Heart left ventricle (tissue), 16 donors: ENCODE measurements at regions of chr16 and their contacts with region 1.

Region 1: DNA sequence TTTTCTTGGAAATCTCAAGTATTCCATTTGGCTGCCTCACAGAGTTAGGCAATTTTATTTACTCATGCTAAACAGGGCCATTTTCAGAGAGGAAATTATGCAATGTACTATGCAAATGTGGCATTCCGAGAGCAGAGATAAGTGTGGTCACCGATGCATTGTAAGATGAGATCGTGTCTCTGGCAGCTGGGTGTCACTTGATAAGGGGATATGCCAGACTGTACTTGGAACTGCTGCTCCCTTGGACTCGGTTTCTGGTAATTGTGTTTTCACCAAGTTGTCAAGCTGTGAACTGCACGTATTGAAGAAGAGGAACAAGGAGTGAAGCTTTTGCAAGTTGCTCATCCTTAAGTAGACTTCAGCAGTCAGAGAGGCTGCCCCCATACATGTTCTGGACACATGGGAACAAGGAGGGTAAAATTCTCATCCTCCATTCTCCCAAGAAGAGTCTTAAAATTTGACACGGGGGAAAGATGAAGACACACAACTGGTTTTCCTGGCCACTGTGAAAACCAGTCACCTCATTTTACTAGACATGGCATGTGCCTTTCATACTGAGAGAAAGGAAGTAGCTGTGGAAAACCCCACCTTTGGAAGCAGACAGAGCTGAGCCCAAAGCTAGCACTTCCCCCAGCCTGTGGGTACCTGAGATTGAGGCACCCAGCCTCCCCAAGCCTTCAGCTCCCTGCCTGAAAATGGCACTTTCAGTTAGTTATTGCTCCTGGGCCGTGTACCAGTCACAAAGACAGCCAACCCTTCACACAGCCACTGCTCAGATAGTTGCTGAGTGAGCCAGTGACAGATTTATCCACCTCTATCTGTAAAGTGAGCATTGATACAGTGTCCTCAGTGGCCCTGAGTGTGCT is 150.7 kb downstream of the SOCS1 start:
- DNase-seq: no peak
- ATAC-seq: peak; percentile 15 to 79 (median 54)
- H3K4me3 ChIP-seq: no peak overlapping the region
- H3K27ac ChIP-seq: peak overlapping the region in 7 of 12 donors; percentile 20 to 78 (median 45)
- H3K4me1 ChIP-seq: peaks cover 9 to 64% (median 44%) of the 10 kb centered on the region in 12 donors
- H3K27me3 ChIP-seq: no peaks in the 10 kb centered on the region
- CTCF ChIP-seq: no peak
- POLR2A ChIP-seq: no peak

Region 2: GRCh38 chr16:10971560-10971961 is 133.7 kb before region 1 on chr16:
- intact Hi-C with region 1: loop called in 4 of 10 experiments (anchors 5 to 10 kb)
- DNase-seq: peak in 4 of 5 donors; percentile 29 to 48 (median 42)
- ATAC-seq: peak in 3 of 4 donors; percentile 51 to 72 (median 52)
- H3K4me3 ChIP-seq: no peak overlapping the region
- H3K27ac ChIP-seq: peak overlapping the region in 1 of 12 donors; percentile 5
- H3K4me1 ChIP-seq: peaks cover 0 to 27% (median 12%) of the 10 kb centered on the region in 12 donors
- H3K27me3 ChIP-seq: no peaks in the 10 kb centered on the region
- CTCF ChIP-seq: peak; percentile 70 to 87 (median 79)
- POLR2A ChIP-seq: no peak

Region 3: GRCh38 chr16:11133344-11133943 is 28.2 kb after region 1 on chr16:
- intact Hi-C with region 1: loop called in 1 of 10 experiments (anchors 1 kb)
- DNase-seq: peak; percentile 73 to 90 (median 80)
- ATAC-seq: peak; percentile 56 to 73 (median 66)
- H3K4me3 ChIP-seq: no peak overlapping the region
- H3K27ac ChIP-seq: peak overlapping the region in 11 of 12 donors; percentile 45 to 84 (median 74)
- H3K4me1 ChIP-seq: peaks cover 0 to 84% (median 58%) of the 10 kb centered on the region in 12 donors
- H3K27me3 ChIP-seq: no peaks in the 10 kb centered on the region
- CTCF ChIP-seq: no peak
- POLR2A ChIP-seq: peak in 1 of 2 donors; percentile 15

Region 4: GRCh38 chr16:11159282-11159681 is 54.0 kb after region 1 on chr16:
- intact Hi-C with region 1: loop called in 2 of 10 experiments (anchors 2 to 10 kb)
- DNase-seq: no peak
- ATAC-seq: no peak
- H3K4me3 ChIP-seq: no peak overlapping the region
- H3K27ac ChIP-seq: peak overlapping the region in 1 of 12 donors; percentile 90
- H3K4me1 ChIP-seq: peaks cover 0 to 48% (median 15%) of the 10 kb centered on the region in 12 donors
- H3K27me3 ChIP-seq: no peaks in the 10 kb centered on the region
- CTCF ChIP-seq: no peak
- POLR2A ChIP-seq: no peak

Region 5: DNA sequence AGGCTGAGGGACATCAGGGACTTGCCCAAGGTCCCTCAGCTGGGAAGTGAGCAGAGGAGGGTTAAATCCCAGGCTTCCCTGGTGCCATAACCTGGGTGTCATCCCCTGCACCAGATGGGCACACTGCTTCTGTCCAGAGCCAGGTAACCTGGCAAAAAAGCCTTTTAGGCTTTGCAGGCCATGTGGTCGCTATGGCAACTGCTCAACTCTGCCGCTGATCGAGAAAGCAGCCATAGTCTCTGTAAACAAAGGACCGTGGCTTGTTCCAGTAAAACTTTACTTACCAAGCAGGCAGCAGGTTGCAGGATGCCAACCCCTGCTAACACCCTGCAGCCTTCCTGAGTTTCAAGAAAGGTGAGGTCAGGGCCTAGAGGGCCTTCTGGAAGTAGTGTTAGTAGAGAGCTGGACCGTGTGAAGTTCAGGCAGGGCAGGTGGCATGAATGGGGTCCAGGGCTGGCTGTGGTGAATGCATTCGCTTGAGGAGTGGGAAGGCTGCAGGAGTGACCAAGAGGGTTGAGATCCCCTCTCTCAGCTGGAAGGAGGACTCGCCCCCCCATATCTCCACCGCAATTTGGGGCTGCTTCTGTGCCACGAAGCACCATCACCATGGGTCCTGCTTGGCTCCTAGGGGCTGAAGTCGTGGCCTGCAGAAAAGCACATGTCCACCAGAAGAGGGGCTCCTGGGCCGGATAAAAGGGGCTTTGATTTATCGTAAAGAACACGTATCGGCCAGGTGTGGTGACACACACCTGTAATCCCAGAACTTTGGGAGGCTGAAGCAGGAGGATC is 59.4 kb after region 1 on chr16:
- intact Hi-C with region 1: loop called in 2 of 10 experiments (anchors 2 to 10 kb)
- DNase-seq: peak in 1 of 5 donors; percentile 11
- ATAC-seq: no peak
- H3K4me3 ChIP-seq: no peak overlapping the region
- H3K27ac ChIP-seq: no peak overlapping the region
- H3K4me1 ChIP-seq: peaks cover 0 to 40% (median 22%) of the 10 kb centered on the region in 12 donors
- H3K27me3 ChIP-seq: no peaks in the 10 kb centered on the region
- CTCF ChIP-seq: no peak
- POLR2A ChIP-seq: no peak

Region 6: GRCh38 chr16:11356573-11357331 is 251.5 kb after region 1 on chr16:
- intact Hi-C with region 1: loop called in 1 of 10 experiments (anchors 10 kb)
- DNase-seq: peak; percentile 59 to 86 (median 69)
- ATAC-seq: peak; percentile 40 to 68 (median 59)
- H3K4me3 ChIP-seq: no peak overlapping the region
- H3K27ac ChIP-seq: peak overlapping the region in 10 of 12 donors; percentile 52 to 87 (median 75)
- H3K4me1 ChIP-seq: peaks cover 5 to 64% (median 25%) of the 10 kb centered on the region in 12 donors
- H3K27me3 ChIP-seq: peaks cover 0 to 34% (median 0%) of the 10 kb centered on the region in 9 donors
- CTCF ChIP-seq: peak; percentile 45 to 72 (median 55)
- POLR2A ChIP-seq: no peak